CD4-positive, alpha-beta T cell (primary cell): ENCODE measurements at regions of chr6 and their contacts with region 1.

Region 1: GRCh38 chr6:127918506-127919427 is 17.9 kb upstream of the THEMIS start:
- DNase-seq: peak in 5 of 14 experiments; percentile 22 to 83 (median 72)
- ATAC-seq: peak; percentile 83
- H3K4me3 ChIP-seq: peak overlapping the region; percentile 64
- H3K4me3 Mint-ChIP-seq: peak overlapping the region; percentile 90
- H3K27ac ChIP-seq: peak overlapping the region; percentile 40 to 49
- H3K27ac Mint-ChIP-seq: peak overlapping the region; percentile 98
- H3K4me1 ChIP-seq: peaks cover 51% of the 10 kb centered on the region
- H3K4me1 Mint-ChIP-seq: peaks cover 89% of the 10 kb centered on the region
- H3K27me3 ChIP-seq: no peaks in the 10 kb centered on the region
- H3K27me3 Mint-ChIP-seq: no peaks in the 10 kb centered on the region
- CTCF ChIP-seq: no peak

Region 2: GRCh38 chr6:127864701-127865100 is 54.1 kb before region 1 on chr6:
- CTCF ChIA-PET with region 1: no interaction called
- POLR2A ChIA-PET with region 1: interaction called, 4 read pairs
- intact Hi-C with region 1: loop called in 1 of 2 experiments (anchors 5 kb)
- DNase-seq: no peak
- ATAC-seq: no peak
- H3K4me3 ChIP-seq: no peak overlapping the region
- H3K4me3 Mint-ChIP-seq: no peak overlapping the region
- H3K27ac ChIP-seq: no peak overlapping the region
- H3K27ac Mint-ChIP-seq: peak overlapping the region; percentile 63
- H3K4me1 ChIP-seq: peaks cover 13% of the 10 kb centered on the region
- H3K4me1 Mint-ChIP-seq: peaks cover 72% of the 10 kb centered on the region
- H3K27me3 ChIP-seq: no peaks in the 10 kb centered on the region
- H3K27me3 Mint-ChIP-seq: no peaks in the 10 kb centered on the region
- CTCF ChIP-seq: no peak

Region 3: GRCh38 chr6:127900935-127901334 is 17.8 kb before region 1 on chr6 and contains the start of gene THEMIS:
- CTCF ChIA-PET with region 1: interaction called, 5 read pairs
- POLR2A ChIA-PET with region 1: interaction called, 81 read pairs
- intact Hi-C with region 1: loop called (anchors 2 kb)
- DNase-seq: peak in 13 of 14 experiments; percentile 22 to 89 (median 44)
- ATAC-seq: peak; percentile 75
- H3K4me3 ChIP-seq: peak within 1 kb of the TSS; percentile 71
- H3K4me3 Mint-ChIP-seq: peak within 1 kb of the TSS; percentile 98
- H3K27ac ChIP-seq: peak within 1 kb of the TSS; percentile 48 to 61
- H3K27ac Mint-ChIP-seq: peak within 1 kb of the TSS; percentile 91
- H3K4me1 ChIP-seq: peaks cover 13% of the 10 kb centered on the region
- H3K4me1 Mint-ChIP-seq: peaks cover 72% of the 10 kb centered on the region
- H3K27me3 ChIP-seq: no peaks in the 10 kb centered on the region
- H3K27me3 Mint-ChIP-seq: no peaks in the 10 kb centered on the region
- CTCF ChIP-seq: no peak
- total RNA-seq, gene THEMIS: 25.0 to 25.3 TPM

Region 4: GRCh38 chr6:127938701-127939100 is 19.9 kb after region 1 on chr6:
- CTCF ChIA-PET with region 1: interaction called, 3 read pairs
- POLR2A ChIA-PET with region 1: interaction called, 61 read pairs
- intact Hi-C with region 1: loop called in 1 of 2 experiments (anchors 2 kb)
- DNase-seq: peak in 3 of 14 experiments; percentile 26 to 62 (median 43)
- ATAC-seq: no peak
- H3K4me3 ChIP-seq: no peak overlapping the region
- H3K4me3 Mint-ChIP-seq: no peak overlapping the region
- H3K27ac ChIP-seq: no peak overlapping the region
- H3K27ac Mint-ChIP-seq: peak overlapping the region; percentile 34
- H3K4me1 ChIP-seq: peaks cover 7% of the 10 kb centered on the region
- H3K4me1 Mint-ChIP-seq: peaks cover 65% of the 10 kb centered on the region
- H3K27me3 ChIP-seq: no peaks in the 10 kb centered on the region
- H3K27me3 Mint-ChIP-seq: no peaks in the 10 kb centered on the region
- CTCF ChIP-seq: no peak

Region 5: DNA sequence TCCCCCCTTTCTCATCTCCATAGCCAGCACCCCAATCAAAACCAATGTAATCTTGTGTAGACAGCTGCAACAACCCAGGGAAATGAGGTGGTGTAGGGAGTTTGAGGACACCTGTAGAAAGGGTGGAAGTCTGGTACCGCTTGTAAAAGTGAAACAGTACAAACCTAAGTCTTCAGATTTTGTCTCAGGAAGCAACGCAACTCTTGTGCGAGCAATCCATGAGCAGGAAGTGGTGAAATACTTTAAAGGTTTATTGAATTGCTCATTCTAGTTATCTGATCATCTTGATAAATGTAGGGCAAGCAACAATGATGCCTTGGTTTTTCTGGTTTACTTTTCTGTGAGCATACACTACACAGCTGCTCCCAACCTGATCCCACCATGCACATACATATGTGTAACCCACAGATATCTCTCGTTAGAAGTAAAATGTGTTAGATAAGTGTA is 53.2 kb after region 1 on chr6:
- CTCF ChIA-PET with region 1: interaction called, 4 read pairs
- POLR2A ChIA-PET with region 1: interaction called, 27 read pairs
- intact Hi-C with region 1: loop called in 1 of 2 experiments (anchors 2 kb)
- DNase-seq: peak; percentile 22 to 91 (median 42)
- ATAC-seq: peak; percentile 88
- H3K4me3 ChIP-seq: peak overlapping the region; percentile 53
- H3K4me3 Mint-ChIP-seq: peak overlapping the region; percentile 90
- H3K27ac ChIP-seq: peak overlapping the region; percentile 67 to 84
- H3K27ac Mint-ChIP-seq: peak overlapping the region; percentile 97
- H3K4me1 ChIP-seq: peaks cover 17% of the 10 kb centered on the region
- H3K4me1 Mint-ChIP-seq: peaks cover 75% of the 10 kb centered on the region
- H3K27me3 ChIP-seq: no peaks in the 10 kb centered on the region
- H3K27me3 Mint-ChIP-seq: no peaks in the 10 kb centered on the region
- CTCF ChIP-seq: no peak

Region 6: DNA sequence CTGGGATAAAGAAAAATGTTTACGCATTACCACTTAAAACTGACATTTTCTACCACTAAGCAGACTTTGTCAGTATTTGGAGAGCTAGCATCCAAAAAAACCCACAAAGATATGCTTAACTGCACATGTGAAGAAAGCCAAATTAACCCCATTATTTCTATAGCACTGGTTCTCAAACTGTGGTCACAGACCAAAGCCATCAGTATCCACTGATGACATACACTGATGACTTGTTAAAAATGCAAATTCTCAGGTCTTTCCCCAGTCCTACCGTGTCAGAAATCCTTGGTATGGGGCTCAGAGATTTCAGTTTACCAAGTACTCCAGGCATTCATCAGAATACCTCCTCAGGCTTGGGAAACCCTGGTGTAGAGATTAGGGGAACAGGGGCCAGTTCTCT is 371.5 kb after region 1 on chr6:
- CTCF ChIA-PET with region 1: no interaction called
- POLR2A ChIA-PET with region 1: no interaction called
- intact Hi-C with region 1: no loop called
- DNase-seq: no peak
- ATAC-seq: no peak
- H3K4me3 ChIP-seq: no peak overlapping the region
- H3K4me3 Mint-ChIP-seq: no peak overlapping the region
- H3K27ac ChIP-seq: no peak overlapping the region
- H3K27ac Mint-ChIP-seq: no peak overlapping the region
- H3K4me1 ChIP-seq: no peaks in the 10 kb centered on the region
- H3K4me1 Mint-ChIP-seq: peaks cover 7% of the 10 kb centered on the region
- H3K27me3 ChIP-seq: no peaks in the 10 kb centered on the region
- H3K27me3 Mint-ChIP-seq: no peaks in the 10 kb centered on the region
- CTCF ChIP-seq: no peak